IMR-90 (cell line): ENCODE measurements at regions of chr5 and their contacts with region 1.

Region 1: DNA sequence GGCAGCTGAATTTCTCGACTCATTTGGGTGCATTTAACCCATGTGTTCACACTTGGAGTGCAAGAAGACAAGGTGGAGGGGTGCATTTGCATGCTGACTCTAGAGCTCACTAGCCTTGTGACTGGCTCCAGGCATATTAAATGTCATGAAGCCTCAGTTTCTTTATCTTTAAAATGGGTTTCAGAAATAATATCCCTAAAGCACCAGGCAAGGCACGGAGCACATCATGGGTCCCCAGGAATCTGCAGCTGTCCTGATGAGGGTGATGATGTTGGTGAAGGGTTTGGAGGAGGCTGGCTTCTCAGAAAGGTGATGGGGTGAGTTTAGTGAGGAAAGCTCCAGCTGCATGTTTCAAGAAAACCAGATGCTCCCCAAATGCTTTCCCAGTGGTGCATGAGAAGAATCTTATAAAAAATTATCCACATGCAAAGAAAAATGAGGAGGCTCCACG is 14.8 kb downstream of the STC2 start:
- DNase-seq: peak; percentile 14
- ATAC-seq: no peak
- H3K4me3 ChIP-seq: no peak overlapping the region
- H3K27ac ChIP-seq: no peak overlapping the region
- H3K4me1 ChIP-seq: peaks cover 31% of the 10 kb centered on the region
- H3K27me3 ChIP-seq: no peaks in the 10 kb centered on the region
- CTCF ChIP-seq: no peak
- POLR2A ChIP-seq: no peak
- RAD21 ChIP-seq: no peak

Region 2: DNA sequence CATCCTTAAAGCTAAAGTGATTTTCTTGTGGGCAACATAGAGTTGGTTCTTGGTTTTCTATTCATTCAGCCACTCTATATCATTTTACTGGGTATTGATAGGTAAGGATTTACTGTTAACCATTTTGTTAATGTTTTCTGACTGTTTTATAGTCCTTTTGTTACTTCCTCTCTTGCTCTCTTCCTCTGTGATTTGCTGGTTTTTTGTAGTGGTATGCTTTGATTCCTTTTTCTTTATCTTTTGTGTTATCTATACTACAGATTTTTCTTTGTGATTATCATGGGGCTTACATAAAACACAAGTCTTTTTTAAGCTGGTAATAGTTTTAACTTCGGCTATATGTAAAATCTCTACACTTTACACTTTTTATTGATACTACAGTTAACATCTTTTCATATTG is 213.9 kb before region 1 on chr5:
- CTCF ChIA-PET with region 1: no interaction called
- POLR2A ChIA-PET with region 1: no interaction called
- dilution Hi-C with region 1: no loop called
- in situ Hi-C with region 1: no loop called
- intact Hi-C with region 1: no loop called
- DNase-seq: no peak
- ATAC-seq: no peak
- H3K4me3 ChIP-seq: no peak overlapping the region
- H3K27ac ChIP-seq: no peak overlapping the region
- H3K4me1 ChIP-seq: peaks cover 3% of the 10 kb centered on the region; the same call in 1 of the 2 replicates
- H3K27me3 ChIP-seq: no peaks in the 10 kb centered on the region
- CTCF ChIP-seq: no peak
- POLR2A ChIP-seq: no peak
- RAD21 ChIP-seq: no peak

Region 3: GRCh38 chr5:174799121-174799520 is 1485.7 kb after region 1 on chr5:
- CTCF ChIA-PET with region 1: no interaction called
- POLR2A ChIA-PET with region 1: no interaction called
- dilution Hi-C with region 1: no loop called
- in situ Hi-C with region 1: no loop called
- intact Hi-C with region 1: loop called (anchors 5 kb)
- DNase-seq: no peak
- ATAC-seq: peak; percentile 73
- H3K4me3 ChIP-seq: no peak overlapping the region
- H3K27ac ChIP-seq: peak overlapping the region; percentile 36; the same call in 1 of the 2 replicates
- H3K4me1 ChIP-seq: peaks cover 5% of the 10 kb centered on the region; the same call in 1 of the 2 replicates
- H3K27me3 ChIP-seq: peaks cover 6% of the 10 kb centered on the region
- CTCF ChIP-seq: no peak
- POLR2A ChIP-seq: no peak
- RAD21 ChIP-seq: no peak